Esophagus muscularis mucosa (tissue), 4 donors: ENCODE measurements at regions of chr13 and their contacts with region 1.

Region 1: DNA sequence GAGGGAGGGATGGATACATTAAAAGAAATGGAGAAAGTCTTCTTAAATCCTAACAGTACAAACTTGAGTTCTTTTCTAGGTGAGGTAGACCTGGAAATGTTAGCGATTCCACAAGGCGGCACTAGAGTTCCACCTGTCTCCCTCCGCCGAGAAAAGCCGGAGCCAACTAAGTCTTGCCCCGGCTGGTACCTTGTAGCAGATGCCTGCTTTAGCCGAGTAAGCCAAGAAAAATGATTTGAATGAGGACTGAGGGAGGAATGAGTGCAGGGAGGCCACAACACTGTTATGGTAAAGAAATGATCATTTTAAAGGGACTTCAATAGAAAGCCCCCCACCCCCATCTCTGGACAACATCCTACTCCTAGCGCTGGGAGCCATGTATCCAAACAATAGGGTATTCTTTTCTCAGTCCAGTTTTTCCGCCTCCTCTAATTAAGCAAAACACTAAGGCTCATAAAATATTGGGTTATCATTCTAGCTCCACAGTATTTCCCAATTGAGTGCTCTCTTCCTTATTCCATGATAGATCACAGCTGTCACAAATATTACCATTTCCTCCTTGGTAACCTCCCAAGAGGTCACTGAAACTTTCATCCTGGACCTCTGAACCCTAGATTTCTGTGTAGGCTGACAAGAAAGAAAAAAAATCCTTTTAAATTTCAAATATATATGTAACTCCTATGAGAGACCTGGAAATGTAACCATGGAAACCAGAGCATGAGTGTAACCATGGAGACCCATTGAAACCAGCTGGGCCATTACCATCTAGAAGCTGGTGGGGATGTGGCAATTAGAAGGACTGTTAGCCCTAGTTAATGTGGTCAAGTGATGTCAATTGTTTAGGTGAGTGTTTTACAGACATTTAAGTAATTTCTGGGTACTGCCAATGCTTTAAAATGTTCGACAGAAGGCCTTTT is 58.3 kb downstream of the GPALPP1 start:
- DNase-seq: no peak
- H3K4me3 ChIP-seq: peak overlapping the region; percentile 45 to 54 (median 53)
- H3K27ac ChIP-seq: no peak overlapping the region
- H3K4me1 ChIP-seq: peaks cover 3 to 22% (median 18%) of the 10 kb centered on the region in 4 donors
- H3K27me3 ChIP-seq: peaks cover 0 to 6% (median 0%) of the 10 kb centered on the region in 4 donors
- CTCF ChIP-seq: peak; percentile 82 to 88 (median 87)
- EP300 ChIP-seq: no peak
- POLR2A ChIP-seq: no peak

Region 2: DNA sequence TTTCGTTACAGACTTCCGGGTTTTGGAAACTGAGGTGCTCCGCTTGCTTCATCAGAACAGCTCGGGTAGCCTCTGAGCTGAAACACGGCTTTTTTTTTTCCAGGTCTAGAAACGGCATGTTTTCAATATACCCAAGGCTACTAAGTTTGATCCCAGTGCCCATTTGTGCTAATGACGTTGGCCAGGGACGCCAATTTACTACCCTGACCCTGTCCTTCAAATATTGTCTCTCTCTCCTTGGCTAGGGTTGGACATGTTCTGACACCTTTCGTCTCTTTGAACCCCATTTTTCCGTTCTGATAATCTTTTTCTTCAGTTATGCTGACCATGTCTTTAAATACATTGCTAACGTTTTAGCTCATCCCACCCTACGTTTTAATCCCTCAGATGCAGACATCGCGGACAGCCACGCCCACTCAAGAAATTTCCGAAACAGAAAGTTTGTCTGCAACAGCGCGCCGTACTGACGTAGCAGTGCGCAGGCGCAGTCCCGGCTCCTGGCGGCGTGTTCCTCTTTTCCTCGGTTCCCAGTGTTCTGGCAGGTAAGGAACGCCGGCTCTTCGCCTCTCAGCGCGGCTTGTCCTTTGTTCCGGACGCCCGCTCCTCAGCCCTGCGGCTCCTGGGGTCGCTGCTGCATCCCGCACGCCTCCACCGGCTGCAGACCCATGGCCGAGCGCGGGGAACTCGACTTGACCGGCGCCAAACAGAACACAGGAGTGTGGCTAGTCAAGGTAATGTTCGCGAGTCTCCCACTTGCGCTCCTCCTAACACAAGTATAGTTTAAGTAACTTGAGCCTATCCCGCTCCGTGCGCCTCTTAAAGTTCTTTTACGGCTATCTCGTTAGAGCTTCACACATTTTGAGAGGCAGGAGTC is 72.6 kb after region 1 on chr13 and contains the start of gene GTF2F2:
- intact Hi-C with region 1: loop called (anchors 5 kb)
- DNase-seq: peak; percentile 96
- H3K4me3 ChIP-seq: peak within 1 kb of the TSS; percentile 76 to 95 (median 87)
- H3K27ac ChIP-seq: peak within 1 kb of the TSS; percentile 80 to 89 (median 84)
- H3K4me1 ChIP-seq: peaks cover 16 to 34% (median 26%) of the 10 kb centered on the region in 4 donors
- H3K27me3 ChIP-seq: no peaks in the 10 kb centered on the region
- CTCF ChIP-seq: peak in 1 of 3 experiments; percentile 18
- EP300 ChIP-seq: no peak
- POLR2A ChIP-seq: no peak
- total RNA-seq, gene GTF2F2: 12.9 to 15.1 (median 14.6) TPM

Region 3: GRCh38 chr13:45280751-45281634 is 233.3 kb after region 1 on chr13:
- intact Hi-C with region 1: loop called (anchors 1 kb)
- DNase-seq: no peak
- H3K4me3 ChIP-seq: no peak overlapping the region
- H3K27ac ChIP-seq: no peak overlapping the region
- H3K4me1 ChIP-seq: peaks cover 0 to 18% (median 8%) of the 10 kb centered on the region in 4 donors
- H3K27me3 ChIP-seq: no peaks in the 10 kb centered on the region
- CTCF ChIP-seq: peak; percentile 74 to 85 (median 83)
- EP300 ChIP-seq: no peak
- POLR2A ChIP-seq: no peak

Region 4: DNA sequence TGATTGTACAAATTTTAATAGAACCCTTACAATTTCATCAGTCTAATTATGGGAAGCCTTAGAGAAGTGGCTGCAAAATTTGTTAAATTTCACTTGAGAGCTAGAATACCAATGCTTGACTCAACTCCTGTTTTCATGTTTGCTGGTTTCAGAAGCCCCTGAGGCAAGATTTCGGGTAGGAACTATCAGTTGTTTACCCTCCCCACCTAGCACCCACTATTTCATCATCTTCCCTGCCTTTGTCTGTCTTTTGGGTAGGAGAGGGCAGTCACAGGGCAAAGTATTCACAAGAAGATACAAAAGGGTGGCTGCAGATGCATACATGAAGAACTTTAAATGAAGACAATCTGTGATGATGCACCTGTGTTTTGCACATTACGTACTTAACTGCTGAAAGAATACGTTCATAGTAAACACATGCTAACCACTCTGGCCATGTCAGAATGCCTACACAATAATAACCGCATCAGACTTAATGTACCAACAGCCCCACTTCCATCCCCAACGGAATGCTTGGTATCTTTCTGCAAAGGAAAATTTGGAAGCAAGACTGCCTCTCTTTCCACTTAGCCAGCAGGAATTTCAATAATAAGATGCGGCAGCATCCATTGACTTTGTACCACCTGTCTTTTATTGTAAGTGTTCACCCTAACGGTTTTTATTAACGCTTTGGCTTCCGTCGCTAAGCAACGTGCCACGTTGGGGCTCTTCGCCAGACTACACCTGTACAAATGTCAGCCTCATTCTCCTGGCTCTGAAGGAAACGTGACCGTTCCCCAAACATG is 262.9 kb after region 1 on chr13:
- intact Hi-C with region 1: loop called (anchors 2 kb)
- DNase-seq: no peak
- H3K4me3 ChIP-seq: peak overlapping the region; percentile 46 to 59 (median 54)
- H3K27ac ChIP-seq: no peak overlapping the region
- H3K4me1 ChIP-seq: peaks cover 5 to 24% (median 23%) of the 10 kb centered on the region in 4 donors
- H3K27me3 ChIP-seq: peaks cover 0 to 8% (median 0%) of the 10 kb centered on the region in 4 donors
- CTCF ChIP-seq: no peak
- EP300 ChIP-seq: no peak
- POLR2A ChIP-seq: no peak